Left lung (tissue), 14 donors: ENCODE measurements at regions of chr5 and their contacts with region 1.

Region 1: DNA sequence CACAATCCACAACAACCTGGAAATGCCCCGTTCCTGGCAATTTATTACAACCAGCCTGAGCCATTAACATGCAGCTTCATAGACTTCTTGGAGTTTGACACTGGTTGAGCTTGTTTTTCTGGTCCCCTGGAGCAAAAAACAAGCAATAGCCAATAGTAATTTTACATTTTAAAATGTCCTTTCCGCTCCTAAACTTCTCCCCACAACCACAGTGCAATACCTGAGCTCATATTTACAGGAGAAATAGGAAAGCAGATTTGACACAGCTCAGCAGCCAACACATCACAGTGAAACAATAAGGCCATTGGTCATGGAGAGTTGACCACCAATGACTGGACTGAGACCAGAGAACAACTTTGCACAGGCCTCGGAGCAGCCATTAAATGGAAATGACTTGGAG is 73.1 kb downstream of the ENC1 start:
- DNase-seq: peak in 1 of 4 donors; percentile 51
- ATAC-seq: no peak
- H3K4me3 ChIP-seq: no peak overlapping the region
- H3K27ac ChIP-seq: no peak overlapping the region
- H3K4me1 ChIP-seq: no peaks in the 10 kb centered on the region
- H3K27me3 ChIP-seq: no peaks in the 10 kb centered on the region
- CTCF ChIP-seq: no peak

Region 2: DNA sequence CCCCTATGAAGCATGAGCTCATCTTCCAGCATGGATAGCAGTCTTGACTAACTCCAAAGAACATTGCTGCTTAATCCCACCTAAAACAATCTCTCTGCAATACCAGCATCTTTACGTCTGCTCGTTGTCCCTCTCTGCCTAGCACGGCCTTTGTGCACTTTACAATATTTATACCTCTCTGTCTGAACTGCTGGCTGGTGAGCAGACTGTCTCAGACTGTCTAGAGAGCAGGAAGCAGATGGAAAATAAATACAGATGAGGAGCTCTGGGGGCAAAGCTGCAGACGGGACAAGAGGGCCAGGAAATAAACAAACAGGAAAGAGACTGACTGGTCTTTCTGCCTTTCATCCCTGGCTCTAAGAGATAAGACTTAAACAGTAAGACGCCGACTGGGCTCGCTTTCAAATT is 151.8 kb before region 1 on chr5:
- intact Hi-C with region 1: no loop called
- DNase-seq: peak in 1 of 4 donors; percentile 32
- ATAC-seq: peak; percentile 73
- H3K4me3 ChIP-seq: no peak overlapping the region
- H3K27ac ChIP-seq: no peak overlapping the region
- H3K4me1 ChIP-seq: peaks cover 7 to 8% of the 10 kb centered on the region in 2 donors
- H3K27me3 ChIP-seq: no peaks in the 10 kb centered on the region
- CTCF ChIP-seq: no peak

Region 3: DNA sequence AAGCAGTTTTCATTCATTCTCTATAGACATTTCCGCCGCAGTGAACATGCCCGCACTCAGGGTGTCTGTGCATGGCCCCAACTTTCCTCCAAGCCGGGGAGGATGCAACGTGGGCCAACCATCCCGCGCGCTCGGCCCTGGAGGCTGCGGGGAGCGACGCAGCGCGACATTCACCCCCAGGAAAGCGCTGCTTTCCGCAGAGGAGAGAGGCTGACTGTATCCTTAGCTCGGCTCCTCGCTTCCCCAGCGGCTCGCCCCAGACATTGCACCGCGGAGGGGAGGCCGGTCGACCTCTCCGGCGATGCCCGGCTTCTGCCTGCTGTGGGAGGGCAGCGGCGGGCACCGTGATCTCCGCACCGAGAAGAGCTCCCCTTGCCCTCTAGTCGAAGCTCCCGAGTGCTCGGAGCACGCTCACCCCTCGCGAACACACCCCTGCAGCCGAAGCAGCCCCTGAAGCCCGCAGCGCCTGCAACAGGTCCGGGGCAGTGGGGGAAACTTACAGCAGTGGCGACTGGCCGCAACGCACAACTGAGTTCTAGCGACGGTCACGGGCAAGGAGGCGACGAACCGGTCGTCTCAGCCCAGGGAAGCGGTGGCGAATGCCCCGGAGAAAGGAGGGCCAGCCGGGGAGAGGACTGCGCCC is 72.5 kb after region 1 on chr5:
- intact Hi-C with region 1: loop called in 1 of 2 experiments (anchors 10 kb)
- DNase-seq: peak in 1 of 4 donors; percentile 87
- ATAC-seq: peak; percentile 15
- H3K4me3 ChIP-seq: peak overlapping the region; percentile 84 to 86
- H3K27ac ChIP-seq: peak overlapping the region; percentile 97
- H3K4me1 ChIP-seq: peaks cover 21 to 75% of the 10 kb centered on the region in 2 donors
- H3K27me3 ChIP-seq: no peaks in the 10 kb centered on the region
- CTCF ChIP-seq: no peak

Region 4: GRCh38 chr5:75225506-75225905 is 658.0 kb after region 1 on chr5:
- intact Hi-C with region 1: no loop called
- DNase-seq: no peak
- ATAC-seq: no peak
- H3K4me3 ChIP-seq: no peak overlapping the region
- H3K27ac ChIP-seq: no peak overlapping the region
- H3K4me1 ChIP-seq: no peaks in the 10 kb centered on the region
- H3K27me3 ChIP-seq: no peaks in the 10 kb centered on the region
- CTCF ChIP-seq: no peak